AG04449 (cell line): ENCODE measurements at regions of chr1 and their contacts with region 1.

Region 1: GRCh38 chr1:6602669-6603237 is at the start of gene KLHL21:
- DNase-seq: no peak
- H3K4me3 ChIP-seq: peak within 1 kb of the TSS; percentile 95
- CTCF ChIP-seq: no peak

Region 2: DNA sequence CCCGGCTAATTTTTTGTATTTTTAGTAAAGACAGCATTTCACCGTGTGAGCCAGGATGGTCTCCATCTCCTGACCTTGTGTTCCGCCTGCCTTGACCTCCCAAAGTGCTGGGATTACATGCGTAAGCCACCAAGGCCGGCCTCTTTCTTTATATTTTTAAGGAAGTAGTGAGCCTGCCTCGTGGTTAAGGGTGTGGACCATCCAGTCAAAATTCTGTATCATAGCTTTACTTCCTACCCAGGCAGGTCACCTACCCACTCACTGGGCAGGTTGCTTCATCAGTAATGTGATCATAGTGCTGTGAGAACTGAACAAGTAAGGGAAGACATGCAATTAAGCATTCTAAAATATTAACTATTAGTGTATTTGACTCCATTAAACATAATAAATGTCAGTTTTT is 201.1 kb before region 1 on chr1:
- CTCF ChIA-PET with region 1: no interaction called
- POLR2A ChIA-PET with region 1: no interaction called
- DNase-seq: no peak
- H3K4me3 ChIP-seq: no peak overlapping the region
- CTCF ChIP-seq: no peak

Region 3: GRCh38 chr1:6591222-6591621 is 11.5 kb before region 1 on chr1:
- CTCF ChIA-PET with region 1: interaction called, 5 read pairs
- POLR2A ChIA-PET with region 1: interaction called, 17 read pairs
- DNase-seq: no peak
- H3K4me3 ChIP-seq: no peak overlapping the region
- CTCF ChIP-seq: no peak

Region 4: GRCh38 chr1:6614929-6615785 is 12.4 kb after region 1 on chr1:
- CTCF ChIA-PET with region 1: interaction called, 6 read pairs
- POLR2A ChIA-PET with region 1: interaction called, 15 read pairs
- DNase-seq: no peak
- H3K4me3 ChIP-seq: peak overlapping the region; percentile 74
- CTCF ChIP-seq: no peak

Region 5: GRCh38 chr1:6962996-6963911 is 360.5 kb after region 1 on chr1:
- CTCF ChIA-PET with region 1: no interaction called
- POLR2A ChIA-PET with region 1: no interaction called
- DNase-seq: no peak
- H3K4me3 ChIP-seq: no peak overlapping the region
- CTCF ChIP-seq: no peak